ENCODE measurements at regions of chr3 and their contacts with region 1.

Region 1: GRCh38 chr3:186849374-186849975 is 7.0 kb downstream of the ADIPOQ start:
- DNase-seq: peak in 2 of 5 donors; percentile 59 to 65
- H3K4me3 ChIP-seq: no peak overlapping the region
- H3K4me3 Mint-ChIP-seq: no peak overlapping the region
- H3K27ac ChIP-seq: no peak overlapping the region
- H3K27ac Mint-ChIP-seq: peak overlapping the region in 4 of 8 donors; percentile 22 to 71 (median 48)
- H3K4me1 ChIP-seq: no peaks in the 10 kb centered on the region
- H3K4me1 Mint-ChIP-seq: peaks cover 18 to 26% (median 18%) of the 10 kb centered on the region in 3 donors
- H3K27me3 ChIP-seq: no peaks in the 10 kb centered on the region
- H3K27me3 Mint-ChIP-seq: peaks cover 14 to 19% of the 10 kb centered on the region in 2 donors

Region 2: GRCh38 chr3:186930641-186931531 is 81.4 kb after region 1 on chr3:
- CTCF ChIA-PET with region 1: interaction called, 116 read pairs
- POLR2A ChIA-PET with region 1: interaction called, 22 read pairs
- DNase-seq: peak; percentile 47 to 80 (median 76)
- H3K4me3 ChIP-seq: peak overlapping the region; percentile 96
- H3K4me3 Mint-ChIP-seq: peak overlapping the region; percentile 93 to 100 (median 99)
- H3K27ac ChIP-seq: peak overlapping the region; percentile 85
- H3K27ac Mint-ChIP-seq: peak overlapping the region; percentile 87 to 99 (median 98)
- H3K4me1 ChIP-seq: peaks cover 28% of the 10 kb centered on the region
- H3K4me1 Mint-ChIP-seq: peaks cover 42 to 47% (median 46%) of the 10 kb centered on the region in 3 donors
- H3K27me3 ChIP-seq: no peaks in the 10 kb centered on the region
- H3K27me3 Mint-ChIP-seq: peaks cover 0 to 4% of the 10 kb centered on the region in 2 donors

Region 3: GRCh38 chr3:186967686-186968085 is 118.2 kb after region 1 on chr3:
- CTCF ChIA-PET with region 1: interaction called, 15 read pairs
- POLR2A ChIA-PET with region 1: no interaction called
- DNase-seq: no peak
- H3K4me3 ChIP-seq: no peak overlapping the region
- H3K4me3 Mint-ChIP-seq: no peak overlapping the region
- H3K27ac ChIP-seq: no peak overlapping the region
- H3K27ac Mint-ChIP-seq: peak overlapping the region in 7 of 8 donors; percentile 59 to 87 (median 84)
- H3K4me1 ChIP-seq: peaks cover 7% of the 10 kb centered on the region
- H3K4me1 Mint-ChIP-seq: peaks cover 33 to 65% (median 48%) of the 10 kb centered on the region in 3 donors
- H3K27me3 ChIP-seq: no peaks in the 10 kb centered on the region
- H3K27me3 Mint-ChIP-seq: no peaks in the 10 kb centered on the region

Region 4: DNA sequence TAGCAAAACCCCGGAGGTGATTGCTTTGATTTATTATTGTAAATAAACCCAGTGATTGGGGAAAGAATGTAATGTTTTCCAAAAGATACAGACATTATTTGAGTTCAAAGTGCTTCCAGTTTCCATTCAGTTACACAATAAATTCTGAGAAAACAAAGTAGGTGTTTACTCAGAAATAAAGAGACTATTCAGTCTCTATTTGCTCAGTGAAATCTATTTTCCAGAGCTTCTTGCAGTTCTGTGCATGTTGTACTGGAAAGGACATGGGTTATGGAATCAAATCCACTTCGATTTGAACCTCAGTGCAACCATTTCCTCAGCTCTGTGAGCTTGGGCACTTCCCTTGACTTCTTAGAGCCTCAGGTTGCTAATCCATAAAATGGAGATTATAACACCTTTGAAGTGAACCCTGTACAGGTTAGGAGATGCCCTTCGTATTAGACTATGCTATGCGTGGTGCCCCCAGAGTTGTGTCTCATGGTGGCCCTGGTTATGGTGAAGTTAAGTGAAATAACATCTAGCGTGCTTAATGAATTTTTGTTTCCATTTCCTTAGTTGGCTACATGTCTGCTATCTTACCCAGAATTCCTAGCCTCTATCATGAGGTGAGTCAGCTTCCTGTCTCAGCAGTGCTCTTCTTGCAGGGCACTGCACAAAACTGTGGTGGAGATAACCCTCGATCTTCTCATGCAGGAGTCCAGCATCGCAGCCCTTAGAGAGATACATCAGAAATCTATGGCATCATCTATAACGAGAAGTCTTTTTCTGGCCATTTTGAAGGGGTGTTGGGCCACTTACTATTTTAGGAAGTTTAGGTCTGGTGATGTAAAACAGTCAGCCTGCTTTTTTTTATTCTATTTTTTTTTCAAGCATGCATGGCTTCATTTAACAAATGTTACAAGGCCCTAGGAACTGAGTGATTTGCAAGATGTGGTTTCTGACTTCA is 192.2 kb after region 1 on chr3:
- CTCF ChIA-PET with region 1: interaction called, 10 read pairs
- POLR2A ChIA-PET with region 1: no interaction called
- DNase-seq: peak in 4 of 5 donors; percentile 21 to 69 (median 58)
- H3K4me3 ChIP-seq: peak overlapping the region; percentile 37
- H3K4me3 Mint-ChIP-seq: peak overlapping the region; percentile 19 to 74 (median 68)
- H3K27ac ChIP-seq: peak overlapping the region; percentile 65
- H3K27ac Mint-ChIP-seq: peak overlapping the region; percentile 84 to 98 (median 94)
- H3K4me1 ChIP-seq: peaks cover 86% of the 10 kb centered on the region
- H3K4me1 Mint-ChIP-seq: peaks cover 71 to 84% (median 83%) of the 10 kb centered on the region in 3 donors
- H3K27me3 ChIP-seq: no peaks in the 10 kb centered on the region
- H3K27me3 Mint-ChIP-seq: no peaks in the 10 kb centered on the region

Region 5: GRCh38 chr3:187112934-187113793 is 263.7 kb after region 1 on chr3:
- CTCF ChIA-PET with region 1: interaction called, 13 read pairs
- POLR2A ChIA-PET with region 1: no interaction called
- DNase-seq: peak in 2 of 5 donors; percentile 24 to 47
- H3K4me3 ChIP-seq: no peak overlapping the region
- H3K4me3 Mint-ChIP-seq: no peak overlapping the region
- H3K27ac ChIP-seq: no peak overlapping the region
- H3K27ac Mint-ChIP-seq: no peak overlapping the region
- H3K4me1 ChIP-seq: no peaks in the 10 kb centered on the region
- H3K4me1 Mint-ChIP-seq: peaks cover 3 to 8% (median 7%) of the 10 kb centered on the region in 3 donors
- H3K27me3 ChIP-seq: no peaks in the 10 kb centered on the region
- H3K27me3 Mint-ChIP-seq: peaks cover 0 to 4% of the 10 kb centered on the region in 2 donors

Region 6: GRCh38 chr3:187164885-187165543 is 315.5 kb after region 1 on chr3:
- CTCF ChIA-PET with region 1: interaction called, 53 read pairs
- POLR2A ChIA-PET with region 1: interaction called, 7 read pairs
- DNase-seq: peak in 4 of 5 donors; percentile 18 to 66 (median 52)
- H3K4me3 ChIP-seq: no peak overlapping the region
- H3K4me3 Mint-ChIP-seq: no peak overlapping the region
- H3K27ac ChIP-seq: no peak overlapping the region
- H3K27ac Mint-ChIP-seq: peak overlapping the region in 1 of 8 donors; percentile 77
- H3K4me1 ChIP-seq: peaks cover 3% of the 10 kb centered on the region
- H3K4me1 Mint-ChIP-seq: peaks cover 2 to 3% (median 3%) of the 10 kb centered on the region in 3 donors
- H3K27me3 ChIP-seq: no peaks in the 10 kb centered on the region
- H3K27me3 Mint-ChIP-seq: peaks cover 8 to 13% of the 10 kb centered on the region in 2 donors

Measured in CD8-positive, alpha-beta memory T cell (primary cell).